Heart left ventricle (tissue), 16 donors: ENCODE measurements at regions of chr18 and their contacts with region 1.

Region 1: DNA sequence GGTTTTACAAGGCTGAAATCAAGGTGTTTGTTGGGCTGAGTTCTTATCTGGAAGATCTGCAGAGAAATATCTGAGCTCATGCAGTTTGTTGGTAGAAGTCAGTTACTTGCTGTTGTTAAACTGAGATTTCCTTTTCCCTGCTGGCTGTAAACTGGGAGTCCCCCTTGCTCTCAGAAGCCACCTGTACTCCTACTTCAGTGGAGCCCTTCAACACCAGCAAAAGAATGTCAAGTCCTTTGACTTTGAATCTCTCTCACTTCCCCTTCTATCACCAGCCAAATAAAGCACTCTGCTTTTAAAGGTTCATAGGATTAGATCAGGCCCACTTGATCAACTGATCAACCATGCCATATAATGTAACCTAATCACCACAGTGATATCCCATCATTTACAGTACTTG is 252.2 kb upstream of the CDH7 start:
- DNase-seq: no peak
- ATAC-seq: no peak
- H3K4me3 ChIP-seq: no peak overlapping the region
- H3K27ac ChIP-seq: no peak overlapping the region
- H3K4me1 ChIP-seq: no peaks in the 10 kb centered on the region
- H3K27me3 ChIP-seq: no peaks in the 10 kb centered on the region
- CTCF ChIP-seq: no peak
- POLR2A ChIP-seq: no peak

Region 2: DNA sequence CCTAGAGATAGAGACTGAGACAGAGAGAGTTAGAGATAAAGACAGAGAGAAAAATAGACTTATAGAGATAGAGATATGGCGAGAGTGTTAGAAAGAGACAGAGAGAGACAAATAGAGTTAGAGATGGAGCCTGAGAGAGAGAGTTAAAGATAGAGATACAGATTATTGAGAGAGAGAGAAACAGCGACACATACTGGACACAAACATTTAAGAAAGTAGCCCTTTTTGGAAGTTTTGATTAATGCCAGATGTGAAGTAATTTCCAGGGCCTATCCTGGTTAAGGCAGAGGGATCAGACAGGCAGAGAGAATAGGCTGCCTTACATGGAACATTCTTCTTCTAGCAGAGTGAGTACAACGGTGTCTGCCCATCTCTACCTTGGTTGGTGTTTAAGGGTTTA is 59.4 kb before region 1 on chr18:
- intact Hi-C with region 1: loop called in 1 of 10 experiments (anchors 10 kb)
- DNase-seq: no peak
- ATAC-seq: no peak
- H3K4me3 ChIP-seq: no peak overlapping the region
- H3K27ac ChIP-seq: no peak overlapping the region
- H3K4me1 ChIP-seq: no peaks in the 10 kb centered on the region
- H3K27me3 ChIP-seq: no peaks in the 10 kb centered on the region
- CTCF ChIP-seq: peak in 1 of 12 donors; percentile 16
- POLR2A ChIP-seq: no peak